Thyroid gland (tissue), 4 donors: ENCODE measurements at regions of chr3 and their contacts with region 1.

Region 1: DNA sequence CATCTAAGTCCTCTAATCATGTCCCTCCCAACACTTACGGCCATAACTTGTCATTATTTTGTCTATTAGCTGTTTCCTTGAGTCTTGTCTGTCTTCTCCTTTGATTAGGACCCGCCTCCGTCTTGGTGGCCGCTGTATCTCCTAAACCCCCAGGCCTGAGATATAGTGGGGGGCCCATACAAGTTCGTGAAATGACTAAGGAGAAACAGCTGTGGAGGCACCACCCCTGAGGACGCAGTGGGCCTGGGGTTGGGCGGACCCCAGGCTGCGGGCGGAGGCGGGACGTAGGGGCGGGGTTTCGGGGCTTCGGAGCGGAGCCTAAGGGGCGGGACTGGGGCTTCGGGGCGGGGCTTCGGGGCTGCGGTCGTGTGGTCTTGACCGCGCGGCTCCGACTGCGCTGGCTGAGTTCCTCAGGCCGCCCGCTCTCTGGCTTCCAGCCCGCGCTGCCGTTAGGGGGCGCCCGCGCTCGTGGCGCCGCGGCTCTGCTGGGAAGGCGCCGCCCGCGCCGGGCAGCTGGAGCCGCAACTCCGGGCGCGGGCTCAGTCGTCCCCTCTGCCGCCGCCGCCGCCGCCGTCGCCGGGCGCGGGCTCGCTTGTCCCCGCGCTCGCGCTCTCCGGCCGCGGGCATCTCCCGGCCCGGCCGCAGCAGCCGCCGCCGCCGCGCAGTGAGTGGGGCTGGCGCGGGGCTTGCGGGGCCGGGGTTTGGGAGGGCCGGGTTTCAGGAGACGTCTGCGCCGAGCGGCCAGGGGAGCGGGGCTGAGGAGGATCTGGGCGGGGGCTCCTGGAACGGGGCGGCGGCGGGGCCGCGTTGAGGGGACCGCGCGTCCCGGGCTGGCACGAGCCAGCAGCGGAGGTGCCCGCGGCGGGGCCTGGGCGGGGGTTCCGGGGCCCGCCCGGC is at the start of gene KCTD6:
- DNase-seq: peak; percentile 92 to 94
- H3K4me3 ChIP-seq: peak within 1 kb of the TSS; percentile 29 to 60 (median 45)
- H3K27ac ChIP-seq: peak within 1 kb of the TSS; percentile 78 to 94 (median 82)
- H3K4me1 ChIP-seq: peaks cover 30 to 31% of the 10 kb centered on the region in 2 donors
- H3K27me3 ChIP-seq: no peaks in the 10 kb centered on the region
- CTCF ChIP-seq: peak in 5 of 6 experiments; percentile 34 to 95 (median 91)
- POLR2A ChIP-seq: peak; percentile 28 to 72
- total RNA-seq, gene KCTD6: 16.6 to 33.6 (median 21.3) TPM

Region 2: DNA sequence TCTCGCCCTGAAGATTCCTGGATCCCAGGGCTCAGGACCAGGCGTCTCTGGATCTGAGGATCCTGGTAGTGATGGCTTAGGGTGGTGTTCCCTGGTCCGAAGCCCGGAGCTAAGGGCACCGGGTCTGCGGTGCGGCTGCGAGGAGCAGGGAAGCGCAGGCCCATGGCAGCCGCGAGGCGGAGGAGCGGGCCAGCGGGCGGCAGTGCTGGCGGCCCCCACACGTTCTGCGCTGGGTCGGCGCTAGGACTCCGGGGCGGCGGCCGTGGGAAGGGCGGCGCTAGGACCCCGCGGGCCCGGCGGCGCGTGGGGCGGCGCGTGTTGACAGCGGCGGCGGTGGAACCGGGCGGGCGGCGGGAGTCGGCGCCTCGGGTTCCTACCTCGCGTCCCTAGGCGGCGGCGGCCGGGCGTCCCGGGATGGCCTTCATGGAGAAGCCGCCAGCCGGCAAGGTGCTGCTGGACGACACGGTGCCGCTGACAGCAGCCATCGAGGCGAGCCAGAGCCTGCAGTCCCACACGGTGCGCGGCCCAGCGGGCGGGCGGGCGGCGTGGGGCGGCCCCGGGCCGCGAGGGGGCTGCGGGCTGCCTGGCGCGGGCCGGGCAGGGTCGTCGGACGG is 159.1 kb before region 1 on chr3 and contains the start of gene PXK:
- intact Hi-C with region 1: loop called (anchors 2 kb)
- DNase-seq: peak; percentile 85
- H3K4me3 ChIP-seq: peak within 1 kb of the TSS; percentile 10 to 80 (median 61)
- H3K27ac ChIP-seq: peak within 1 kb of the TSS; percentile 77 to 96 (median 91)
- H3K4me1 ChIP-seq: peaks cover 41 to 56% of the 10 kb centered on the region in 2 donors
- H3K27me3 ChIP-seq: no peaks in the 10 kb centered on the region
- CTCF ChIP-seq: peak in 2 of 6 experiments; percentile 16 to 39
- POLR2A ChIP-seq: peak; percentile 62 to 87
- total RNA-seq, gene PXK: 98.6 to 139 (median 123) TPM

Region 3: GRCh38 chr3:58433400-58434169 is 58.2 kb before region 1 on chr3 and contains the start of gene PDHB:
- intact Hi-C with region 1: loop called (anchors 5 kb)
- DNase-seq: peak; percentile 92 to 93
- H3K4me3 ChIP-seq: peak within 1 kb of the TSS; percentile 72 to 81 (median 74)
- H3K27ac ChIP-seq: peak within 1 kb of the TSS; percentile 89 to 93 (median 91)
- H3K4me1 ChIP-seq: peaks cover 19 to 20% of the 10 kb centered on the region in 2 donors
- H3K27me3 ChIP-seq: no peaks in the 10 kb centered on the region
- CTCF ChIP-seq: no peak
- POLR2A ChIP-seq: peak; percentile 30 to 87
- total RNA-seq, gene PDHB: 51.5 to 139 (median 77.0) TPM